Cardiac septum (tissue), 1 donor: ENCODE measurements at regions of chr1 and their contacts with region 1.

Region 1: DNA sequence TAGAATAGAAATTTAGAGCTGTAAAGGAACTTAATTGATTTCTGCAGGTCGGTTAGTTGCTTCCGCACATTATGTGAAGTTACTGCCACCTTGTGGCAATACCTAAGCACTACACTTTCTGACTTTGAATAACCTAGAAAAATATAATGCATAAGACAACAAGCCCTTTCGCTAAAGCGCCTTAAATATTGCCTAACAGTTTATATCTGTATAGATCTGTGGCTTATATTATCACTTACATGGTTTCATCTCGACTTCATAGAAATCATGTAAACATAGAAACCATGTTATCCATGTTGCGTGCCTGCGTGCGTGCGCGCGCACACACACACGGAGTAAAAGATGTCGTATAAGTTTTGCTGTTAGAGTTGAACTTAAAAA is 10.9 kb upstream of the IFI16 start:
- DNase-seq: no peak

Region 2: GRCh38 chr1:157963713-157964112 is 1035.1 kb before region 1 on chr1:
- intact Hi-C with region 1: loop called (anchors 10 kb)
- DNase-seq: no peak

Region 3: GRCh38 chr1:158203693-158204457 is 794.9 kb before region 1 on chr1:
- intact Hi-C with region 1: loop called (anchors 5 kb)
- DNase-seq: no peak

Region 4: GRCh38 chr1:159009704-159010361 is 11.1 kb after region 1 on chr1 and contains the start of gene IFI16:
- intact Hi-C with region 1: loop called (anchors 1 kb)
- DNase-seq: no peak
- total RNA-seq, gene IFI16: 31.1 TPM

Region 5: GRCh38 chr1:159071970-159072582 is 73.3 kb after region 1 on chr1:
- intact Hi-C with region 1: loop called (anchors 5 kb)
- DNase-seq: no peak